ENCODE measurements at regions of chr9 and their contacts with region 1.

Region 1: GRCh38 chr9:136118320-136119060 is at the start of gene TMEM250:
- DNase-seq: peak; percentile 71 to 97 (median 93)

Region 2: DNA sequence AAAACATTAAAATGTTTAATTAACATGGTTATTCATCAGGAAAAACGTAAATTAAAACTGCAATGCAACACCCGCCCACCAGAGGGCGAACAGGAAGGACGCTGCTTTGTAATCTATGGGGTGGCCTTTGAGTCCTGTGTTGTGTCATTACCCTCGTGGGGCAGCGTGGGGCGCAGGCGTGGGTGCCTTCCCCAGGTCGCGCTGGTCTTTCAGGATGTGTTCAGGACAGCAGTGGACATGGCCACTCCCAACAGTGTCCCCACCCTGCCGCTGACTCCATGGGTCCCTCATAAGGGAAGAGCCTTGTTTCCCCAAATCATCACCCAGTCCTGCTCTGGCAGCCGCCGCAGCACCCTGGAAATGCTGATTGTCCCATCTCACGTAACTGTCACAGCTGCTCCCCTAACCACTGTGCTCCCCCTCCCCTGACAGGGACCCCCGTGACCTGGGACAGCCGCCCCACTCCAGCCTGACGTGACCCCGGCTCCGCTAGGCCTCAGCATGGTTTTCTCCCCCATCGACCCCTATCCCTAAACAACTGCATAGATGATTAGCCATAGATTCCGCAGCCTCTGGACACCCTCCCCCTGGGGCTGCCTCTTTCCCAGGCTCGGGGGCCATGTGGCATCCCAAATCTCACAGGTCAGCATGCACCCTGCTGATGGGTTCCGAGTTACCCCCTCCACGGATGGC is 515.6 kb before region 1 on chr9:
- intact Hi-C with region 1: loop called (anchors 10 kb)
- DNase-seq: peak in 35 of 42 donors; percentile 11 to 79 (median 50)

Region 3: DNA sequence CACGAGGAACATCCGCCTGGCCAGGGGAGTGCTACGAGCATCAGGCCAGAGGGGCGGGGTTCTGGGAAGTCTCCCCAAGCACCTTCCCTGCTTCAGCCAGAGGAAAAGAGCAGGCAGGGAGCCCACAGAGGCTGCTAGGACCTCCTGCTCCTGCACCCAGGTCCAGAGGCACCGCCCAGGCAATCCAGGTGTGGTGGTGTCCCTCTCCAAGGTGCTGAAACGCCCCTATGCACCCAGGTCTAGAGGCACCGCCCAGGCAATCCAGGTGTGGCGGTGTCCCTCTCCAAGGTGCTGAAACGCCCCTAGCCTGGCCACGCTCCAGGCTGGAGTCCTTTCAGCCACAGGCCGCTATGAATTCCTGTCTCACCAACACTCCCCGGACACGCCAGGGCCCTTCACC is 146.6 kb before region 1 on chr9:
- intact Hi-C with region 1: loop called (anchors 1 kb)
- DNase-seq: no peak

Region 4: GRCh38 chr9:136051517-136052432 is 66.7 kb before region 1 on chr9:
- intact Hi-C with region 1: loop called (anchors 2 kb)
- DNase-seq: peak; percentile 77 to 97 (median 91)

Region 5: DNA sequence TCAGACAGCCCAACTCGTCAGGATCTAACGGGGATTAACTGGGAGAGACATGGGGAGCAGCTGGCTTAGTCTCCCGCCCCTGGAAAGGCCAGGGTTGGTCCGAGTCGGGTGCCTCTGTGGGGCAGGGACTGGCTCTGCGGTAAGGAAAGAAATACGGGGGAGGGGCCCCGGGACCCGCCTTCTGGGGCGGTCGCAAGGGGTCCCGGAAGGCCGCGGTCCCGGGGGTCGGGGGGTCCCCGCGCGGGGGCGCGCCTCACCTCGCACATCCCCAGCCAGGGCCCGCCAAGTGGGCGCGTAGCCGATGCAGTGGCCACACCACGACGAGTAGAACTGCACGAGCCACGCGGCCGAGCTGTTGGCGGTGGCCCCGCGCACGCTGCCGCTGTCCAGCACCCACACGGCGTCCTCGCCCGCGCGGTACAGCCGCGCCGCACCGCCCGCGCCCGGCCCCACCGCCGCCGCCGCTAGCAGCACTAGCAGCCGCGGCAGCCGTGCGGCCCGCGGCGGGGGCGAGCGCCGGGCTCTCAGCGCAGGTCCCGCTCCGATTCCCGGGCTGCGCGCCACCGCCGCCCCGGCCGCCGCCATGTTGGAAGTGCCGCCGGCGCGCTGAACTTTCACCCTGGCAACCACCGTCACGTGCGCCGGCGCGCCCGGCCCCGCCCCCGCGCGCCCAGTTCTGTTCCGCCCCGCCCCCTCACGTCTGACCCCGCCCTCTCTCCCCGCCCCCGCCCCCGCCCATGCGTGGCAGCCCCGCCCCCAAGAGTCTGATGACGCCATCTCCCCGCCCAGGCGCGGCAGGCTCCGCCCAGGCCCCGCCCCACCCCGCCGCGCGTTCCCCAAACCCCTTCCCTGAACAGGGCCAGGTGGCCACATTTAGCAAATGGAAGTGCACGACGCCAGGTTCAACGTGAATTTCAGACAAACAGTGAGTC is 127.0 kb after region 1 on chr9 and contains the start of gene QSOX2:
- intact Hi-C with region 1: loop called (anchors 10 kb)
- DNase-seq: peak; percentile 68 to 95 (median 90)